ENCODE measurements at regions of chr2 and their contacts with region 1.

Region 1: GRCh38 chr2:65227425-65228262 is at the start of gene ACTR2:
- DNase-seq: peak; percentile 86 to 98
- ATAC-seq: peak; percentile 97
- H3K4me3 ChIP-seq: peak within 1 kb of the TSS; percentile 94
- H3K27ac ChIP-seq: peak within 1 kb of the TSS; percentile 95 to 98
- H3K4me1 ChIP-seq: peaks cover 43% of the 10 kb centered on the region
- CTCF ChIP-seq: no peak
- EP300 ChIP-seq: peak in 1 of 2 experiments; percentile 18; a peak in 1 of 5 replicates
- POLR2A ChIP-seq: peak; percentile 90
- RAD21 ChIP-seq: no peak
- polyA plus RNA-seq, gene ACTR2: 233 and 270 TPM in 2 replicates

Region 2: DNA sequence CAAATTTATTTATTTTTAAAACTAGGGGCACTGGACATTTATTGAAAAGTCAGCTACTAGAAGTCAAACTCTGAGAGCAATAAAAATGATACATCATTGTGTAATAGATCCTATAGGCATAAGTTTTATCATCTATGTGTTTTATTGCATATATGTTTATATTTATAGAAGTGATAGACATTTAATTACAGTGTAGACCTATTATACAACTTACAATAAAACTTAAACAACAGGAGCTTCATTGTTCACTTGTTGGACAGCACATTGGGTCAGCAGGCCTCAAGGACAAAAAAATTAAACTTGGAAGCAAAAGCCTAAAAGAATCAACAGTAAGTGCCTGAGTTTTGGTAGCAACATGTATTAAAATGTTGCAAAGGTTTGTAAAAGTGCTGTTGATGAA is 15.0 kb before region 1 on chr2:
- CTCF ChIA-PET with region 1: interaction called, 6 read pairs
- POLR2A ChIA-PET with region 1: interaction called, 15 read pairs
- DNase-seq: no peak
- ATAC-seq: no peak
- H3K4me3 ChIP-seq: no peak overlapping the region
- H3K27ac ChIP-seq: no peak overlapping the region
- H3K4me1 ChIP-seq: no peaks in the 10 kb centered on the region
- CTCF ChIP-seq: no peak
- EP300 ChIP-seq: no peak
- POLR2A ChIP-seq: no peak
- RAD21 ChIP-seq: no peak

Region 3: DNA sequence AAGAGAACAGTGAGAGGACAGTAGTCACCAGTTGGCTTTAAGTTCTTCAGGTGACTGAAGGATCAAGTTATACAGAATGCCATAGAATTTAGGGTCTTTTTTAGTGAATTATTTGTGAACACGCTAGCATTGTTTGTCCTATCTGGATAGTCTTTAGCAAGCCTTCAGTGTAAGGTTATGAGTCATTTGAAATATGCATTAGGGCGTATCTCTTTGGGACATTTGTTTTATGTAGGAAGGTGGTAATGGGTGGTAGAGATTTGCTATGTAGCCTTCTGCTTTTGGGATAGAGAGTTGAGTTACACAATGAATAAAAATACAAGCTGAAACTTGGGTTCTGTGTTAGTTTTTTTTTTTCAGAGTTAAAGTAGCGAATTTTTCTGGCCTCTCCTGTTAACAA is 13.0 kb after region 1 on chr2:
- CTCF ChIA-PET with region 1: interaction called, 3 read pairs
- POLR2A ChIA-PET with region 1: interaction called, 11 read pairs
- DNase-seq: no peak
- ATAC-seq: peak in 1 of 2 experiments; percentile 32; a peak in 1 of 6 replicates
- H3K4me3 ChIP-seq: no peak overlapping the region
- H3K27ac ChIP-seq: no peak overlapping the region
- H3K4me1 ChIP-seq: peaks cover 12% of the 10 kb centered on the region; the same call in 2 of the 3 replicates
- CTCF ChIP-seq: no peak
- EP300 ChIP-seq: no peak
- POLR2A ChIP-seq: no peak
- RAD21 ChIP-seq: no peak

Region 4: GRCh38 chr2:65393743-65394422 is 166.2 kb after region 1 on chr2:
- CTCF ChIA-PET with region 1: no interaction called
- POLR2A ChIA-PET with region 1: no interaction called
- DNase-seq: no peak
- ATAC-seq: no peak
- H3K4me3 ChIP-seq: no peak overlapping the region
- H3K27ac ChIP-seq: no peak overlapping the region
- H3K4me1 ChIP-seq: peaks cover 33% of the 10 kb centered on the region
- CTCF ChIP-seq: no peak
- EP300 ChIP-seq: no peak
- POLR2A ChIP-seq: no peak
- RAD21 ChIP-seq: no peak

Region 5: DNA sequence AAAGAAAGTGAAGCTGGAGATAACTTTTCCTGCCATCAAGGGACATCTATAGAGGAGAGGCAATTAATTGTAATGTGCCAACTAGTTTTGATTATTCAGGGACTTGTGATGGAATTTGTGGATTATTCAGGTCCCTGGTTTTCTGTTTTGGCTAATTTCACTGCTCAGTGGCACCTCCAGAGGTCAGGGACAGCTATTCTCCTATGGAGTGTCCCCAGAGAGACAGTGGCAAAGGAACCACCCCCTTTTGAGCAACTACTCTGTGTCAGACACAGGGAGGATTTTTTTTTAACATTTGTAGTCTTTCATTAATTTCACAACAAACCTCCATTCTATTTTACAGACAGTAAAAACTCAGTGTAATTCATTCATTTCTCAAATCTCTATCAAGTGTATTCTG is 410.8 kb after region 1 on chr2:
- CTCF ChIA-PET with region 1: no interaction called
- POLR2A ChIA-PET with region 1: no interaction called
- DNase-seq: peak in 1 of 2 experiments; percentile 40
- ATAC-seq: peak; percentile 63 to 73; a peak in 5 of 6 replicates
- H3K4me3 ChIP-seq: no peak overlapping the region
- H3K27ac ChIP-seq: no peak overlapping the region
- H3K4me1 ChIP-seq: peaks cover 9% of the 10 kb centered on the region; the same call in 2 of the 3 replicates
- CTCF ChIP-seq: peak; percentile 11; the same call in 1 of the 3 replicates
- EP300 ChIP-seq: no peak
- POLR2A ChIP-seq: no peak
- RAD21 ChIP-seq: no peak